ENCODE measurements at regions of chr2 and their contacts with region 1.

Region 1: GRCh38 chr2:181810823-181811695 is 80.5 kb upstream of the ITPRID2 start:
- DNase-seq: peak in 1 of 2 donors; percentile 51
- ATAC-seq: peak; percentile 78 to 97 (median 94)
- H3K4me3 ChIP-seq: peak overlapping the region in 2 of 10 donors; percentile 6 to 9
- H3K27ac ChIP-seq: peak overlapping the region in 9 of 10 donors; percentile 9 to 74 (median 57)
- H3K4me1 ChIP-seq: peaks cover 0 to 35% (median 11%) of the 10 kb centered on the region in 9 donors
- H3K27me3 ChIP-seq: no peaks in the 10 kb centered on the region
- CTCF ChIP-seq: no peak

Region 2: DNA sequence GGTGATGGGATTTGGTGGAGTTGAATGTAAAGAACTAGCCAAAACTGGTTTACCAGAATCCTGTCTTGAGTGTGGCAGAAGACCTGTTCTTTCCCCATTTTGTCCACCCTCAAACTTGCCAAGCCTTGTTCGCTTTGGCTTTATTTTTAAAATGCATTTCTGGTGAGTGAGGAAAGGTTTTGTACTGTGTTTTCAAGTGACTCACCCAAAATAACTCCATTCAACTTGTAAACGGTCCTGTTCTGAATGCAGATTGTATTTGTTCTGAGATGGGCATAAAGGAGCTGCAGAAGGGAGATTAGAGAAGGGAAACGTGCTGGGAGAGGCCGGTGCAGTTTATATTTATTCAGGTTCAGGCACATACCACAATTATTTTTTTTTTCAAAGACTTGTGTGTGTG is 75.1 kb after region 1 on chr2:
- intact Hi-C with region 1: loop called in 1 of 10 experiments (anchors 10 kb)
- DNase-seq: no peak
- ATAC-seq: peak in 1 of 8 donors; percentile 30
- H3K4me3 ChIP-seq: no peak overlapping the region
- H3K27ac ChIP-seq: no peak overlapping the region
- H3K4me1 ChIP-seq: peaks cover 0 to 35% (median 14%) of the 10 kb centered on the region in 9 donors
- H3K27me3 ChIP-seq: no peaks in the 10 kb centered on the region
- CTCF ChIP-seq: no peak